ENCODE measurements at regions of chr9 and their contacts with region 1.

Region 1: DNA sequence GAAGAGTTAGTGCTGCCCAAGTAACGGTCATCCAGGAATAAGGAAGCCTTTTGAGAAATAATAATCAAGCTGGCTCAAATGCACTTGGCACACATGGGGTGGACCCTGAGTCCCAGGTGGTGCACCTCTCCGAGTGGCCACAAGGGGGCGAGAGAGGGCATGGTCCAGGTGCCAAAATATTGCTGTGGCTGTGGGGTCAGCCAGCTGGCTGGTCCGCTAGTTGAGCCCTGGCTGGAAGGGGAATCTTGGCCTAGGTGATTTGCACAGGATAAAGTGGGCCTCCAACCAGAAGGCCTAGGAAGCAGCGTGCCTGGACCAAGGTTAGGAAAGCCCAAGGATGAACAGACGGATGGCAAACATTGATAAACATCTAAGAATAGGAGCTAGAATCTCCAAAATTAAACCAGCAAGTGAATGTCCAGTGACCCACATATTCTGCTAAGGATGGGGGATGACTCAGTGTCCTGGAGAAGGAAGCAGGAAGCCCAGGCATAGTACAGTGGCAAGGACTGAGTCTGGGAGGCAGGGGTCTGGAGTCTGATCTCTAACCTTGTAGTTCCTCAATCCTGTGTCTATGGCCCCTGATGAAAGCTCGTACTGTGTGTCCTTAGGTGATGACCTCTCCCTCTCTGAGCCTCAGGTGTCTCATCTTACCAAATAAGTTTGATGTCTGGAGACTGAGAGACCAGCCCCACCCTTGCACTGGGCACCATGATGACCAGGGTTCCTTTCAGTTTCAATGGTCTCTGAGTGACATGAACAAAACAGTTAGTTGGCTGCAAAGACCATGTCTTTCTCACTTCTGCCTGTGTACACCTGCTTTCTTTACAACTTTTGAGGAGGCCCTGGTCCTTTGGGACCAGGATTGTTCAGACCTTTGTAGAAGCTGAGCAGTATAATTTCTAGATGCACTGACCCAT is 19.2 kb upstream of the SHB start:
- DNase-seq: peak; percentile 54
- H3K4me3 ChIP-seq: no peak overlapping the region
- H3K27ac ChIP-seq: no peak overlapping the region
- H3K4me1 ChIP-seq: no peaks in the 10 kb centered on the region
- CTCF ChIP-seq: peak; percentile 96

Region 2: DNA sequence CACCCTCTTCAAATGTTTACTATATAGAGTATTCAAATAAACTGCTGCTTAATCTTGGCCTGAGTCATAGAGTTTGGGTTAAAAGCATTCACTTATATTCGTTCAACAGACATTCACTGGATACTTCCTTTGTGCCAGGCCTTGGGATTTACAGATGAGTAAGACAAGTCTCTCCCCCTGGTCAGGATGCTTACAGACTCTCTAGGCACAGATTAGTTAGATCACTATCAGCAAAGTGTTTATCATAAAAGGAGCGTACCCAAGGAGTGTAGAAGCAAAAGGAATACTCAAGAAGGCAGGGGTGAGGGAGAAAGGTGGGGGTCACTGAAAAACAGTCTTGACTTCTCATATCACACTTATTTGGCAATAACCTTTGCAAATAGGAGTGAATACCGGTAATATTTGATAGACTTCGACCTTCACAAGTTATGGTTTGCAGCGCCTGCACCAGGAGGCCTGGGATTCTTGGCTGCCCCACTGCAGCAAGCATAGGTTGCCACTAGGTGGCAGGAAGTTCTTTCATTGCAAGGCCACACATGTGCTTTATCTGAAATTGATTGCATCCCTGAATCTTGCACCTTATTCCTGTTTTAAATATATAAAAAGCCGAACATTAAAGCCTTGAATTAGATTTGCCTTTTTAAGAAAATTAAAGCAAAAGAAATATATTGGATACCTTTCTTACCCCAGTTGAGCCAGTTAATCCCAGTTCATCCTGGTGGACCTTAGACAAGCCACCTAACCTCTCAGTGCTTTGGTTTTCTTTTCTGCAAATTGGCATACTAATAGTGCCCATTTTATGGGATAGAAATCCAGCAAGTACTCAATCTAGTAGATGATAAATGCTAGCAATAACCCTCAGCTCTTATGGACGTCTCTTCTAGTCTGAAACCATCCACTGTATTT is 341.2 kb before region 1 on chr9:
- CTCF ChIA-PET with region 1: no interaction called
- POLR2A ChIA-PET with region 1: no interaction called
- intact Hi-C with region 1: loop called (anchors 10 kb)
- DNase-seq: peak; percentile 75
- H3K4me3 ChIP-seq: no peak overlapping the region
- H3K27ac ChIP-seq: no peak overlapping the region
- H3K4me1 ChIP-seq: no peaks in the 10 kb centered on the region
- CTCF ChIP-seq: peak; percentile 99

Region 3: DNA sequence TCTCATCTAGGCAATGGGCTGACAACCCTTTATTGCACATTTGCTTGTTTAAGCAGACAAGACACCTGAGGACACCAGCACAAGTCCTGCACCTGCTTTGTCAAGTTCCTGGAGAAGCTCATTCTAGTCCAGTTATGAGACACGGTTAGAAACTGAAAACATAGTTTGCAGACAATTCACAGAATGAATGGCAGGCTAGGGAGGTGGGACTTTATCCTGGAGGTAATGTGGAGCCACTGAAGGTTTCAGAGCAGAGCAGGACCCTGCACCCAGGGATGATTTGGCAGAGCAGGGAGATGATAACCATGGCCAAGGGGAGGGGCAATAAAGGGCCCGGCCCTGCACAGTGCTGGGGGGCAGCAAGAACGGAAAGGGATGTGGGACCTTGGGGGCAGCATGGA is 133.7 kb before region 1 on chr9:
- CTCF ChIA-PET with region 1: no interaction called
- POLR2A ChIA-PET with region 1: no interaction called
- intact Hi-C with region 1: no loop called
- DNase-seq: no peak
- H3K4me3 ChIP-seq: no peak overlapping the region
- H3K27ac ChIP-seq: no peak overlapping the region
- H3K4me1 ChIP-seq: no peaks in the 10 kb centered on the region
- CTCF ChIP-seq: no peak

Region 4: GRCh38 chr9:38263532-38263931 is 175.3 kb after region 1 on chr9:
- CTCF ChIA-PET with region 1: no interaction called
- POLR2A ChIA-PET with region 1: no interaction called
- intact Hi-C with region 1: loop called (anchors 1 kb)
- DNase-seq: peak; percentile 26
- H3K4me3 ChIP-seq: no peak overlapping the region
- H3K27ac ChIP-seq: no peak overlapping the region
- H3K4me1 ChIP-seq: no peaks in the 10 kb centered on the region
- CTCF ChIP-seq: peak; percentile 72

Region 5: GRCh38 chr9:38405785-38406184 is 317.5 kb after region 1 on chr9:
- CTCF ChIA-PET with region 1: no interaction called
- POLR2A ChIA-PET with region 1: no interaction called
- intact Hi-C with region 1: loop called (anchors 5 kb)
- DNase-seq: no peak
- H3K4me3 ChIP-seq: no peak overlapping the region
- H3K27ac ChIP-seq: no peak overlapping the region
- H3K4me1 ChIP-seq: no peaks in the 10 kb centered on the region
- CTCF ChIP-seq: no peak

Measured in OCI-LY7 (cell line).